Activated CD4-positive, alpha-beta T cell treated with anti-CD3 and anti-CD28 coated beads, Interleukin-2, amount 10 ng/mL, durations not matched to agents 24 days and 14 days (primary cell): ENCODE measurements at regions of chrX and their contacts with region 1.

Region 1: DNA sequence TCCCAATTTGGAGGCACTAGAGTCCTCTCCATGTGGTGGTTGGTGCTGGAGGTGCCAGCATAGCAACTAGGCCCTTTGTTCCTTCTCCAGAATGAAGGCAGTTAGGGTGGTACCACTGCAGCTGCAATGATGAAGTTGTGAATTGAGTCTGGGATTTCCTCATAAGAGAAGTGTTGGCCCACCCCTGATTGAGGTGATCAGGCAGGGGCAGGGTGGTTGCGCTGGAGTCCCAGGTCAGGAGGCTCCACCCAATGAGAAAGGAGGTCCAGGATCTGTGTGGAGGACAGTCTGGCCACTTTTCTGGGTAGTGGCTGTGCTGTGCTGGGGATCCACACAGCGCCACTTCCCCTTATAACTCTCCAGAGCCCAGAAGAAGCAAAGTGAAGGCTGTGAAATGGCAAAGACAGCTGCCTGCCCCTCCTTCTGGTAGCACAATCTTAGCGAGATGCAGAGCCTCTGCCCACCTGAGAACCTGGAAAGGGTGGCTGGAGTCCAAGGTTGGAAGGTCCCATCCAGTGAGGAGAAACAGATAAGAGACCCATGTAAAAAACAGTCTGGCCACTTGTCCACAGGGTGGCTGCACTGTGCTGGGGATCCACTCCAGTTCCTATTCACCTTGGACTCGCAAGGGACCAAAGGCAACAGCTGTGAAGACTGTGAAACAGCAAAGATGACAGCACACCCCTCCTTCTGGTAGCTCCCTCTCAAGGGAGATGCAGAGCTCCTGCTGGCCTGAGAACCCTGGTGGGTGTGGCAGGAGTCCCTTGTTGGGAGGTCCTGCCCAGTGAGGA is 124.6 kb downstream of the RRAGB start:
- DNase-seq: no peak
- H3K4me3 Mint-ChIP-seq: no peak overlapping the region
- H3K27ac Mint-ChIP-seq: no peak overlapping the region
- H3K4me1 Mint-ChIP-seq: no peaks in the 10 kb centered on the region
- H3K27me3 Mint-ChIP-seq: no peaks in the 10 kb centered on the region

Region 2: DNA sequence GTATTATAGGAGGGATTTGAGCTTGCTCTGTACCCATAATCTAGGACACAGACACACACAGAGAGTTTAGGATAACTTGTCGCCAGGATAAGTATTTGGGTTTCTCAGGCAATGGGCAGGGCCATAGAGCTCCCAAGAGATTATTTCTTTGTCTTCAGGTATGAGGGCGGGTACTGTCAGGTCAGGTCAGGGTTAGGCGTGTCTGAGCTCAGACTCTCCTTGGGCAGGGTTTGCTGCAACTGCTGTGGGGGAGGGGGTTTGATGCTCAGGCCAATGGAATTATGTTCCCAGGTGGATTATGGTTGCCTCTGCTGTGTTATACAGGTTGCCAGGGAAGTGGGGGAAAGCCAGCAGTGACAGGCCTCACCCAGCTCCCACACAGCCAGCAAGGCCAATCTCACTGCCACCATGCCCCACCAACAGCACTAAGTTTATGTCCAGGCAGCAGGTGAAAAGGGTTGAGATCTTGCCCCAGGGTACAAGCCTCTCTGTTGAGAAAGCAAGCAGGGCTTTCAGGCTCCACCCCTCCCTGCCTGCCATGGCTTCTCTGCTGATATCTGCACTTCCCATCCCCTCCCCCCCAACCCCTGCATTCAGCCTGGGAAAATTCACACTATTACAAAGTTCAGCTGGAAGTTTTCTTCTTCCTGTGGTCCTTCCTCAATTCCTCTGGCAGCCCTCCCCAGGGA is 23.3 kb before region 1 on chrX:
- intact Hi-C with region 1: no loop called
- DNase-seq: no peak
- H3K4me3 Mint-ChIP-seq: no peak overlapping the region
- H3K27ac Mint-ChIP-seq: no peak overlapping the region
- H3K4me1 Mint-ChIP-seq: no peaks in the 10 kb centered on the region
- H3K27me3 Mint-ChIP-seq: no peaks in the 10 kb centered on the region

Region 3: DNA sequence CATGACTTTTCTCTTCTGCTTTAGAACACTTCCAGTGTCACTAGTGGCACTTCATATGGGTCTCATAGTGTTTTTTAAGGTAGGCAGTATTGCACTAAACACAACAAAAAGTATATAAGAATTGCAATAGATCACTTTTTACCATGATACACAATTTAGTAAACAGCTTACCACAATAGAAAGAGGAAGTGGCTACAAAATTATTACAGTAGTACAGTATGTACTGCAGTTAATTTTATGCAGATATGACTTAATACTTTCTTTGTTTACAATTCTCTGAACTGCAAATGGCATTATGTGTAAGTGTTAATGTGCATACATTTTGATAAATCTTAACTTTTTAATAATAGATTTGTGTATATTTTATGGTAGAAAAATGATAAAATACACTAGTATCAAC is 32.6 kb after region 1 on chrX:
- intact Hi-C with region 1: loop called (anchors 2 kb)
- DNase-seq: no peak
- H3K4me3 Mint-ChIP-seq: no peak overlapping the region
- H3K27ac Mint-ChIP-seq: no peak overlapping the region
- H3K4me1 Mint-ChIP-seq: no peaks in the 10 kb centered on the region
- H3K27me3 Mint-ChIP-seq: no peaks in the 10 kb centered on the region